Astrocyte of the cerebellum (primary cell): ENCODE measurements at regions of chr11 and their contacts with region 1.

Region 1: GRCh38 chr11:128503245-128503991 is 83.9 kb downstream of the ETS1 start:
- DNase-seq: no peak
- H3K4me3 ChIP-seq: no peak overlapping the region
- CTCF ChIP-seq: no peak

Region 2: GRCh38 chr11:128448200-128448886 is 55.1 kb before region 1 on chr11:
- in situ Hi-C with region 1: loop called (anchors 5 kb)
- DNase-seq: peak; percentile 78
- H3K4me3 ChIP-seq: no peak overlapping the region
- CTCF ChIP-seq: no peak